Activated T-helper 2 cell treated with anti-CD3 and anti-CD28 coated beads, Interferon-gamma antibody, Interleukin-2, Interleukin-4, amounts not matched to agents 10 μg/mL and 5 μg/mL and 100 μg/mL, durations not matched to agents 14 hours and 24 hours and 36 hours (primary cell): ENCODE measurements at regions of chr7 and their contacts with region 1.

Region 1: DNA sequence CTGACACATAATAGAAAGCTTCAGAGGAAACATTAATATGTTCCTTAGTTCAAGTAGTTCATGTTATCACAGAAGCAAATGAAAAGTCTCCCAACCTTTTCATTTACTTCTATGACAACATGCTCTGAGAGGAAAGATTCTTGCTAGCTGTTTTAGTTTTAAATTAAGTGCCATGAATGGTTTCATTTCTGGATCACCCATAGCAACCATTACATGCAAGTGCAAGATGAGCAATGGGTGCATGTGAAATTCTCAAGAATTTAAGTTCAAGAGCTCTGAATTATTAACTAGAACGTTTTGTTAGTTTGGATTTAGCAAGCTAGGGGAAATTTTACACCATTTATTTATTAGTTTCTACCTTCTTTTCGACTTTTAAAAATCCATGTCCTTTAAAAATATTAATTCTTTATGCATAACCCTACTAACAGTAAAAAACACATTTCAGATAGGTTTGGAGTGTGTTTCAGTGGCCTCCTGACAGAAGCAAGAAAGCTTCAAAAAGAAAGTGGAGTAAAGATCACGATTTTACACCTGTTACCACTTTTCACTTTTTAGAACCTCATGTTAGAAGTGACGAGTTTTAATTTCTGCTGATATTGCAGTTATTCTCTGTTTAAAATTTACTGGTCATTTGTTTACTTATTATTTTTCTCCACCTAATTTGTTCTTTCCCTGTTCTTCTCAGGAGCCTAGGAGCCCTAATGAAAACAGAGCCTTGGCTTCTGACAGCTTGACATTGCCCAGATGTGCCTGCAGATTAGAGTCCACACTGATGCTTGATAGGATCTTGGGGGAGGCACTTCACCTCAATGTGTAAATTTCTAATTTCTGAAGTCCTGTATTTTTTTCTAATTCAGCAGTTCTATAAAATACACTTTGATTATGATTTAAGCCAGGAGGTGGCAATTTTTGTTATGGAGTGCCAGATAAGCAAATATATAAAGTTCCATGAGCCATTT is 995.3 kb upstream of the PHF14 start:
- DNase-seq: no peak
- H3K4me3 Mint-ChIP-seq: no peak overlapping the region
- H3K27ac Mint-ChIP-seq: peak overlapping the region; percentile 47
- H3K4me1 Mint-ChIP-seq: peaks cover 12% of the 10 kb centered on the region
- H3K27me3 Mint-ChIP-seq: no peaks in the 10 kb centered on the region

Region 2: GRCh38 chr7:9945879-9946278 is 32.5 kb before region 1 on chr7:
- intact Hi-C with region 1: loop called (anchors 1 kb)
- DNase-seq: no peak
- H3K4me3 Mint-ChIP-seq: no peak overlapping the region
- H3K27ac Mint-ChIP-seq: no peak overlapping the region
- H3K4me1 Mint-ChIP-seq: no peaks in the 10 kb centered on the region
- H3K27me3 Mint-ChIP-seq: no peaks in the 10 kb centered on the region

Region 3: DNA sequence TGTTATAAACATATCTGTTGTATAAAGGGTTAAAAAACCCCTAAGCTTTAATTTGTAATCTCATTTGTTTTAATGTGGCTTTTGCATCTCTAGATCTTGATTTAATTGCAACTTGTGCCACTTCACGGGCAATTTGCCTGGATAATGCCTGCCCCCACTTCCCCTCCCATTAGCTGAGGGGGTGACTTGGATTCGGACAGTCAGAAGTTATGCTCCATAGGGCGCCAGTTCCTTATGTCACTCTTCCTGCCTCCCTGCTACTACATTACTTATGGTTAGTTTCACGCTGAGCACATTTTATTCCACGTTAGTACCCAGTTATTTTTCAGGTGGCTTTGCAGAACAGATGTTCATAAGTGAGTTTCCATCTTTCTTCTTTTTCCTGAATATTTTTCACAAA is 19.9 kb before region 1 on chr7:
- intact Hi-C with region 1: no loop called
- DNase-seq: no peak
- H3K4me3 Mint-ChIP-seq: no peak overlapping the region
- H3K27ac Mint-ChIP-seq: no peak overlapping the region
- H3K4me1 Mint-ChIP-seq: no peaks in the 10 kb centered on the region
- H3K27me3 Mint-ChIP-seq: no peaks in the 10 kb centered on the region

Region 4: DNA sequence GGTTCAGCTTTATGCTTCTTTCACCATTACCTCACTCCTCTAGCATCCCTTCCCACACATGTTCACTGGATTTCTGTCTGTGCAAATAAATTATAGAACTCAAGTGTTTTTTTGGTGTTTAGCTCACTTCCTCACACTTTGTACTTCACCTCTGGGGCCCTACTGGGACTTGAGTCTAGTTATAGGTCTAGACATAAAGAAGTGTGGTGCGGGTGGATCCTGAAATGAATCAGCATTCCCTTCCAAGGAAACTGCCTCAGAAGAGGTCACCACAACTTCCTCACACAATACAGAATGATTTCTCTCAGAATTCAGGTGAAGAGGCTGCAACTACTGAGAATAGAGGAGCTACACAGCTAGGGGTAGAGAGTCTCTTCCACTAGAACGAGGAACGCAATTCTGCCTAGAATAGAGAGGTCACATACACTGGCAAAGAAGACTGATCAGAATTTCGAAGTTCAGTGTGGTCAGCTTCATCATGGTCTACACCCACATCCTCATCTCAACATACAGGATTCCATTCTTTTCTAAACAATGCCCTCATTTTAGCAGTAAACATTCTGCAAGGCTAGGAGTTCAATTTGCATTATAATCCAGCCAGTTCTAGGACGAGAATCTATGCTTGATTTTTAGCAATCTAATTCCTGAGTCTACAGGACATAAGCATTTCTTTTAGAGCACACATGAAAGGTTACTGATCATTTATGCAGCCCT is 56.6 kb after region 1 on chr7:
- intact Hi-C with region 1: loop called (anchors 2 kb)
- DNase-seq: no peak
- H3K4me3 Mint-ChIP-seq: no peak overlapping the region
- H3K27ac Mint-ChIP-seq: peak overlapping the region; percentile 20
- H3K4me1 Mint-ChIP-seq: peaks cover 20% of the 10 kb centered on the region
- H3K27me3 Mint-ChIP-seq: no peaks in the 10 kb centered on the region